Gastrocnemius medialis (tissue), 4 donors: ENCODE measurements at regions of chr2 and their contacts with region 1.

Region 1: DNA sequence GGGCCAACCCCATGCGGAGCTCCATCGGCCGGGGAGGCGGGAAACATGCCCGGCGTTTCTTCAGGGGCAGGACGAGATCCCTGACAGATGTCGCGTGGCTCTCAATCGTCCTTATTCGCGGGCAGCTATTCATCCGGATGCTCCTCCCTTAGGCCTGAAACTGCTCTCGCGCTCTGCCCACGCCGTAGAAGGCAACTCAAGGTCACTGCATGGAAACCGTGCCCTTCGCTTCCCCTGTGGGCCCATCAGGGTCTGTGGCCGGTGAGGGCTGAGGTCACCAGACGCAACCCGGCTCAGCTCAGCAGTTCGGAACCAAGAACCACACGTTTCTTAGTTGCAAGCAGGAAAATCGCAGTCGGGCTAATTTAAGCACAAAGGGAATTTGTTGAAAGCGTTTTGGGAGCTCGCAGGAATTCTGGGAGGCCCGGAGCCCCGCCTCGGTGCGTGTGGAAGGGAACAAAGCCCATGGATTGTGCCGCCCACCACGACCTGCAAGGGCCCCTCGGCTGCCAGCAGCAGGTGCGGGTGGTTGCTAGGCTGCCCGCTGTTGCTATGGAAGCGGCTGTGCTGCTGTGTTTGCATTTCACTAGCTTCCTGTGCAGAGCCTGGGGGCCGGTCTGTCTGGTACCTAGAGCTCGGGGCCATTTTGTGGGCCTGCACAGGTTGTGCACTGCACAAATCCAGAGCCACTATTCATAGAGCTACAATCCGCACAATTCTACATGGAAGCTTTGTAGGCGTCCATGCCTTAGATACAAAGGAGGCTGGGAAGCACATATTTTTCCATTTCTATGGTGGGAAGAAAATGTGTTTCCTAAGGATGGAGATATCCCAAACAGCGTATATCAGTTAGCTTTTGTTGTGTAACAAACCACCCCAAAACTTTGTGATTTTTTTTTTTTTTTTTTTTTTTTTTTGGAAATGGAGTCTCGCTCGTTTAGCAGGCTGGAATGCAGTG is 6.0 kb upstream of the ALLC start:
- DNase-seq: no peak
- ATAC-seq: peak in 1 of 2 donors; percentile 29
- H3K4me3 ChIP-seq: peak overlapping the region in 3 of 4 donors; percentile 17 to 28 (median 27)
- H3K27ac ChIP-seq: peak overlapping the region in 3 of 4 donors; percentile 0 to 57 (median 3)
- H3K4me1 ChIP-seq: no peaks in the 10 kb centered on the region
- H3K27me3 ChIP-seq: no peaks in the 10 kb centered on the region
- CTCF ChIP-seq: no peak
- POLR2A ChIP-seq: no peak

Region 2: GRCh38 chr2:2121887-2122286 is 1530.1 kb before region 1 on chr2:
- in situ Hi-C with region 1: no loop called
- intact Hi-C with region 1: loop called (anchors 5 kb)
- DNase-seq: no peak
- ATAC-seq: no peak
- H3K4me3 ChIP-seq: no peak overlapping the region
- H3K27ac ChIP-seq: no peak overlapping the region
- H3K4me1 ChIP-seq: no peaks in the 10 kb centered on the region
- H3K27me3 ChIP-seq: no peaks in the 10 kb centered on the region
- CTCF ChIP-seq: no peak
- POLR2A ChIP-seq: no peak

Region 3: GRCh38 chr2:3423492-3424175 is 228.3 kb before region 1 on chr2:
- in situ Hi-C with region 1: loop called in 1 of 4 experiments (anchors 5 kb)
- intact Hi-C with region 1: loop called (anchors 2 kb)
- DNase-seq: peak; percentile 12 to 60
- ATAC-seq: peak; percentile 66 to 79
- H3K4me3 ChIP-seq: no peak overlapping the region
- H3K27ac ChIP-seq: no peak overlapping the region
- H3K4me1 ChIP-seq: no peaks in the 10 kb centered on the region
- H3K27me3 ChIP-seq: no peaks in the 10 kb centered on the region
- CTCF ChIP-seq: peak; percentile 81 to 99 (median 90)
- POLR2A ChIP-seq: no peak

Region 4: DNA sequence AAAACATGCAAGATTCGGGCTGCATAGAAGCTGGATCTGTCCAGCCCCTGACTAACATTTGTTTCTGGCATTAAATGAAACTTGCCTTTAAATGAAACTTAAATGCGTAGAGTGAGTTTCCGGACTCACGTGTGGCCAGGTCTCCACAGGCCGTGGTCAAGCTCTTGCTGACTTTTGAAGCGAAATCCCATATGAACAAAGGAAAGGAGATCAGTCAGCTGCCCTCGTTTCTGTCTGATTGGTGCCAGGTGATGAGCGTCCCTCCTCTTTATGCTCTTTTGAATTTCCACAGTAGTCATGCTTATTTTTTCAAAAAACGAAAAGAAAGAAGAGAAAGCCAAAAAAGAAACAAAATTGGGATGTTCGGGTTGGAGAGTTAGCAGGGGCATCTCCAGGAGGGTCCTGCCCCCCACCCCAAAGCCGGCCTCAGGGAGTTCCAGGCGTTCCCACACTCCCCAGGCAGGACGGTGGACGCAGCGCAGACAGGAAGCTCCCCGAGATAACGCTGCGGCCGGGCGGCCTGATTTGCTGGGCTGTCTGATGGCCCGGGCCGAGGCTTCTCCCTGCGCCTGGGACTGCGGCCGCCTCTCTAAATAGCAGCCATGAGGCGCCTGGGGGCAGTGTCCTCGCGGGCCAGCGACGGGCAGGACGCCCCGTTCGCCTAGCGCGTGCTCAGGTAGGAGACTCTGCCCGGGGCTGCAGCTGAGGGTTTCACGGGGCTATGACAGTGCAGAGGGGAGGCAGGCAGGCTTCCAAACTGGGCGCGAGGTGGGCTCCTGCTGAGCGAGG is 57.3 kb before region 1 on chr2 and contains the start of gene COLEC11:
- in situ Hi-C with region 1: no loop called
- intact Hi-C with region 1: loop called (anchors 10 kb)
- DNase-seq: no peak
- ATAC-seq: peak in 1 of 2 donors; percentile 21
- H3K4me3 ChIP-seq: peak within 1 kb of the TSS in 3 of 4 donors; percentile 6 to 35 (median 14)
- H3K27ac ChIP-seq: peak within 1 kb of the TSS in 1 of 4 donors; percentile 5
- H3K4me1 ChIP-seq: no peaks in the 10 kb centered on the region
- H3K27me3 ChIP-seq: no peaks in the 10 kb centered on the region
- CTCF ChIP-seq: peak in 1 of 5 experiments; percentile 36
- POLR2A ChIP-seq: no peak
- total RNA-seq, gene COLEC11: 0.29 to 0.36 TPM in 2 of 4 donors, not detected in the others

Region 5: GRCh38 chr2:3672861-3673678 is 21.1 kb after region 1 on chr2:
- in situ Hi-C with region 1: no loop called
- intact Hi-C with region 1: no loop called
- DNase-seq: no peak
- ATAC-seq: no peak
- H3K4me3 ChIP-seq: no peak overlapping the region
- H3K27ac ChIP-seq: no peak overlapping the region
- H3K4me1 ChIP-seq: no peaks in the 10 kb centered on the region
- H3K27me3 ChIP-seq: no peaks in the 10 kb centered on the region
- CTCF ChIP-seq: no peak
- POLR2A ChIP-seq: no peak

Region 6: GRCh38 chr2:3902131-3902530 is 250.2 kb after region 1 on chr2:
- in situ Hi-C with region 1: no loop called
- intact Hi-C with region 1: no loop called
- DNase-seq: no peak
- ATAC-seq: no peak
- H3K4me3 ChIP-seq: no peak overlapping the region
- H3K27ac ChIP-seq: no peak overlapping the region
- H3K4me1 ChIP-seq: no peaks in the 10 kb centered on the region
- H3K27me3 ChIP-seq: no peaks in the 10 kb centered on the region
- CTCF ChIP-seq: no peak
- POLR2A ChIP-seq: no peak